ENCODE measurements at regions of chr10 and their contacts with region 1.

Region 1: DNA sequence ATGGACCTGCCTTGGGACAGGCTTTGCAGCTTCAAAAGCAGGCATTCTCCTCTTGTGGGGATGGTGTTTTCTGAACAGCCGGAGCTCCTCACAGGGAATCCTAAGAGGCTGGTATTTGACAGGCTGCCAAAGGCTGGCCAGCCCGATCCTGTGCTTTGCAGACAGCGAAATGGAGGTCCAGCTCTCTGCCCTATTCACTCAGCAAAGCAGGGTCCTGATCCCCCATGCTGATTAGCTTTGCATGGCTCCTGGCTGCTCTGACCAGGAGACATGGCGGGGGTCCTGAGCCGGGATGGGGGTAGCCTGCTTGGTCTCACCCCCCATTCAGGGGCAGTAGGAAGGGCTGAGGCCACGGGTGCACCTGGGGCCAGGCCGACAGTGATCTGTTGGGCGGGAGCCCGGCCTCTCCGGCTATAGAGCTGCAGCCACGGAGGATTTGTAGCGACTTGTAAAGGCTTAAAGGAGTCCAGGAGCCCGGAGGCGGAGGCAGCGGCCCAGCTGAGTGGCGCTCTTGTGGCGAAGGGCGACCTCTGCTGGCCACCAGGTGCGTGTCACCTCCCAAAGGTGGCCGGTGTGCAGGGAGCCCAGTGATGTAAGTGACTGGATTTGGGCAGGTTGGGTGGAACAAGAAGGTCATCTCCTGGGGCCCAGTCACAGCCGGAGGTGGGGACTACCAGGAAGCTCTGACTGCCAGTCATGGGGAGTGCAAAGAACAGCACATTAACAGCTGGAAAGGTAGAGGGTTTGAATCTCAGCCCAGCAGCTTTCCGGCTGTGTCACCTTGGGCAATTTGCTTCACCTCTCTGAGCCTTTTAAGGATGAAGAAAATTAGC is 126.5 kb downstream of the ZMIZ1 start:
- DNase-seq: peak; percentile 84
- H3K4me3 Mint-ChIP-seq: no peak overlapping the region
- H3K27ac Mint-ChIP-seq: no peak overlapping the region
- H3K4me1 Mint-ChIP-seq: peaks cover 5% of the 10 kb centered on the region
- H3K27me3 Mint-ChIP-seq: no peaks in the 10 kb centered on the region

Region 2: DNA sequence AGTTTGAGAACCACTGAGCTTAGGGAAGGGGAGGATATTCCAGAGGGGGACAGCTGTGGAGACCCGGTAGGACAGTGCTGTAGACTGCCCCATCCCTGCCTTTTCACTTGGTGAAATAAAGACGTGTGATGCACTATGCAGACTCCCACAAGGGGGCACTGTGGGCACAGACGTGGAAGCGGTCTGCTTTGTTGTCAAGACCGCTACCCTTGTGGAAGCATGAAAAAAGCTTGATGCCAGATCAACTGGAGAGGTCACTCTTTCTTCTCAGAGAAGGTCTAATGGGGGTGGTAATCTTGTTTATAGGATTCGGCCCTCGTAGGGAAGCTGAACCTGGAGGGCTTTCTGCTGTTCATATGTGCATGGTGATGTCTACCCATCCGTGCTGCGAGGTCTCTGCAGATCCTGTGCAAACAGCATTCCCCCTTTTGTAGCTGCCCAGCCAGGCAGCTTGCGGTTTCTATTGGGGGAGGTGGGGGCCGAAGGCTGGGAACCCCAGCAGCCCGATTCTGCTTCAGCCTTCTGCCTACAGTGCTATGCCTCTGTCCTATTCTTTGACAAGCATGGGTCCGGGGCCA is 1147.9 kb before region 1 on chr10:
- CTCF ChIA-PET with region 1: interaction called, 41 read pairs
- intact Hi-C with region 1: loop called (anchors 1 kb)
- DNase-seq: peak; percentile 90
- H3K4me3 Mint-ChIP-seq: no peak overlapping the region
- H3K27ac Mint-ChIP-seq: no peak overlapping the region
- H3K4me1 Mint-ChIP-seq: peaks cover 26% of the 10 kb centered on the region
- H3K27me3 Mint-ChIP-seq: no peaks in the 10 kb centered on the region

Region 3: GRCh38 chr10:78255796-78256638 is 939.3 kb before region 1 on chr10:
- CTCF ChIA-PET with region 1: no interaction called
- intact Hi-C with region 1: loop called (anchors 5 kb)
- DNase-seq: no peak
- H3K4me3 Mint-ChIP-seq: no peak overlapping the region
- H3K27ac Mint-ChIP-seq: no peak overlapping the region
- H3K4me1 Mint-ChIP-seq: no peaks in the 10 kb centered on the region
- H3K27me3 Mint-ChIP-seq: no peaks in the 10 kb centered on the region

Region 4: DNA sequence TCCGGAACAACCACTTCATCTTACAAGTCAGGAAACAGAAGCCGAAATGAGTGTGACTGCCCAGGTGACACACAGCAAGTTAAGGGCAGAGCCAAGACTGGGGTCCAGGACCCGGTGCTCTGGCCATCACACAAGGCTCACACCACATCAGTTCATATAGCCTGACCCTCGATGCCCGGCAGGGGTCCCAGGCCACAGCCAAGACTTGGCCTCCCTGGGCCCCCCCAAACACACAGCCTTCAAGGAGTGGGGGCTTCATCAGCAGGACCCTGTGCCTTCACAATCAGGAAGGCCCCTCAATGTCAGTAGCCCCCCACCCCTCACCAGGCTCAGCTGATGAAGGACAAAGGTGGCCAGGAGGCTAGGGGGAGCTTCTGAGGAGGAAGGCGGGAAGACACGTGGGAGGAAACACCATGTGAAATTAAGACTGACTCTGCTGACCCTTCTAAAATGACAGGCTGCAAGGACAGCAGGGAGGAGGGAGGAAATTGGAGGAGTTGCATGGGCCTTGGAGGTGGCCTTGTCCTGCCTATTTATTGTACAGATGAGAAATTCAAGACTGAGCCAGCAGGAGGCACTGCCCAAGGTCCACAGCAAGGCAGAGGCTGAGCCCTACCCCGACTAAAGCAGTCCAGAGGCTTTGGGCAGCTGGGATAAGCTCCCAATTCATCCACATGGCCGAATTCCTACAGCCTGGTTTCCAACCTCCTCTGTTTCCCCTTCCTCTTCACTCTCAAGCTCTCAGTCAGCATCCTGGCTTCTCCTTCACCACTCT is 342.7 kb before region 1 on chr10:
- CTCF ChIA-PET with region 1: interaction called, 5 read pairs
- intact Hi-C with region 1: loop called (anchors 5 kb)
- DNase-seq: peak; percentile 31
- H3K4me3 Mint-ChIP-seq: no peak overlapping the region
- H3K27ac Mint-ChIP-seq: no peak overlapping the region
- H3K4me1 Mint-ChIP-seq: no peaks in the 10 kb centered on the region
- H3K27me3 Mint-ChIP-seq: no peaks in the 10 kb centered on the region

Region 5: GRCh38 chr10:78944723-78945312 is 250.5 kb before region 1 on chr10:
- CTCF ChIA-PET with region 1: interaction called, 20 read pairs
- intact Hi-C with region 1: no loop called
- DNase-seq: peak; percentile 12
- H3K4me3 Mint-ChIP-seq: no peak overlapping the region
- H3K27ac Mint-ChIP-seq: no peak overlapping the region
- H3K4me1 Mint-ChIP-seq: peaks cover 10% of the 10 kb centered on the region
- H3K27me3 Mint-ChIP-seq: no peaks in the 10 kb centered on the region

Region 6: GRCh38 chr10:79266543-79267312 is 71.4 kb after region 1 on chr10:
- CTCF ChIA-PET with region 1: no interaction called
- intact Hi-C with region 1: loop called (anchors 5 kb)
- DNase-seq: no peak
- H3K4me3 Mint-ChIP-seq: no peak overlapping the region
- H3K27ac Mint-ChIP-seq: no peak overlapping the region
- H3K4me1 Mint-ChIP-seq: peaks cover 10% of the 10 kb centered on the region
- H3K27me3 Mint-ChIP-seq: no peaks in the 10 kb centered on the region

Measured in activated naive CD4-positive, alpha-beta T cell treated with anti-CD3 and anti-CD28 coated beads for 36 hours (primary cell).